ENCODE measurements at regions of chr15 and their contacts with region 1.

Region 1: DNA sequence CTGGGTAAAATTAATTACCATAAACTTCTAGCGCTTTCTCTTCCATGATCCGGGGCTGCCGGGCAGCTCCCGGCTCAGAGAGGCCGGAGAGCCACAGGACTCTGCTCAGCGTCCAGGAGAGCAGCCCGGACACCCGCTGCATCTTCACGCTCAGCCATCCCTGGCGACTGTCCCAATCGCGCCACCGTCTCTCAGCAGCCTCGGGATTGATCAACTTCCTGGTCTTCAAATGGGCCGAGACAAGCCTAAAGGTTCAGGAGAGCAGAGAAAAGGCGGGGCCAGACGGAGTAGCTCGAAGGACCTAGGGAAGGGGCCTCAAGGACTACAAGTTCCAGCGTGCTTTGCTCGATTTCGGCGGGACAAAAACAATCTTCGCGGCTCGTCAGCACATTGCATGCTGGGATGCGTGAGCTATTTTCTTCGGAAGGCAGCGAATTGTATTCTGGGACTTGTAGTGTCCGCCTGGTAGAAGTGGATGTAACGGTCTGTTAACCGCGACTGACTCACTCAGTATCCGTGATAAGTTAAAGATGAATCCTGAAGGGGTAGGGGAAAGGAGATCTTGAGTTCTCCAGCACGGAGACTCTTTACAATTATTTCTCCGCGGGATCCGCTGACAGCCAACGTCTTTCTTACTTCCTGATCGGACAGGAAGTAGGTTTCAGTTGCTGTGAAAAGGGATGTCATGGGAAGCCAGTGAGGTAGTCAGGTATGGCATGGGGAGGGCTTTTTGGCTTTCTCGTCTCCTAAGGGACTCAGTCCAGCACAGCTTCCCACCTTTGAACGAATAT is at the start of gene CIAO2A:
- DNase-seq: peak; percentile 98 to 99 (median 99)
- H3K4me3 ChIP-seq: peak within 1 kb of the TSS; percentile 52 to 90 (median 84)
- H3K4me3 Mint-ChIP-seq: peak within 1 kb of the TSS; percentile 97 to 99
- H3K27ac ChIP-seq: peak within 1 kb of the TSS; percentile 87 to 95
- H3K27ac Mint-ChIP-seq: peak within 1 kb of the TSS; percentile 97 to 100 (median 99)
- H3K4me1 ChIP-seq: peaks cover 80 to 91% of the 10 kb centered on the region in 2 donors
- H3K4me1 Mint-ChIP-seq: peaks cover 71% of the 10 kb centered on the region
- H3K27me3 ChIP-seq: no peaks in the 10 kb centered on the region
- H3K27me3 Mint-ChIP-seq: no peaks in the 10 kb centered on the region
- CTCF ChIP-seq: no peak
- polyA plus RNA-seq, gene CIAO2A: 98.2 to 265 (median 261) TPM

Region 2: DNA sequence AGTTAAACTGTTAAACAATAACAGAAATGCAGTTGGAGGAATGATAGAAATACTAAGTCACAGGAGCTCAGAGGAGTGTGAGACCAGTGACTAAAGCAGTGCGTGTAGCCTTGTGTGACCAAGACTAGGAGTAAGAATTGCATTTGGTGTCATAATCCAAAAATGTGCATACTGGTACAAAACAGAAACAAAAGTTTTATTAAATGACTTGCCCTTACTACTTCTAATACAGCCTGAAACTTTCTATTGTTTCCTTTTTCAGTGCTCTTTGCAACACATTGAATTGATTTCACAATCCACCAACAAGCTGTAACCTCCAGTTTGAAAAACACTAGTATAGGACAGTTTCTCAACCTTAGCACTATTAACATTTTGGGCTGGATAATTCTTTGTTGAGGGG is 19.1 kb after region 1 on chr15:
- intact Hi-C with region 1: loop called in 1 of 2 experiments (anchors 2 kb)
- DNase-seq: peak; percentile 38 to 75 (median 55)
- H3K4me3 ChIP-seq: peak overlapping the region in 1 of 3 experiments; percentile 44
- H3K4me3 Mint-ChIP-seq: peak overlapping the region in 1 of 2 donors; percentile 75
- H3K27ac ChIP-seq: peak overlapping the region; percentile 62 to 90
- H3K27ac Mint-ChIP-seq: peak overlapping the region; percentile 81 to 94 (median 90)
- H3K4me1 ChIP-seq: peaks cover 38 to 45% of the 10 kb centered on the region in 2 donors
- H3K4me1 Mint-ChIP-seq: peaks cover 54% of the 10 kb centered on the region
- H3K27me3 ChIP-seq: no peaks in the 10 kb centered on the region
- H3K27me3 Mint-ChIP-seq: no peaks in the 10 kb centered on the region
- CTCF ChIP-seq: no peak

Region 3: DNA sequence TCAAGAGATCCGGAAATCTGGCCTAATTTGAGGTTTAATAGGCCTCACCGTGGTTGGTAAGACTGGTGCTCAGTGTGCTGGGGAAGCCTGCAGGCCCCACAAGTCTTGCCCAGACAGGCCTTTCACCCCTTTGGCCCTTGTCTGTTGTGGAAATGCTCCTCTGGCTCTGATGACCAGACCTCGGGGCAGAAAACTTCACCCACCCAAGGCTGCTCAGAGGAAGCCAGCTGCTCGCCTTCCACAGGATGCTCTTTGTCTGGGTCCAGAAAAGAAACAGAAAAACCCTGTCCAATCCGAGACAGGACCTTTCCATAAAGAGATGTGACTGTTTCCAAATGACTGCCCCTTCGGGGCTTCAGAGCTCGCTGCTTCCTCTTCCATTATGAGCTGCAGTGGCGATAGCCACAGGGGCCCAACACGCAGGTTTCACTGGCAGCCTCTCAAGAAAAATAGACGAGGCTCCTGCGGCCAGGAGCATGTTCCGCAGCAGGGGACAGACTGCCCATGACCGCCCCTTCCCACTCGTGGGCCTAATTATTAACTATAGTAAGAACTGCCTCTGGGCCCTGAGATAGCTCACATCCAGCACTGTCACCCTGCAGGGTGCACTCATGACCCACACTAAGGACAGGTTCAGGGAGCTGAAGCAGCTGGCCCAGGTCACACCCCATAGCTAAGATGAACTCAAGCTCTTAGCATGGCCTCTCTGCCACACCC is 50.9 kb after region 1 on chr15:
- intact Hi-C with region 1: no loop called
- DNase-seq: no peak
- H3K4me3 ChIP-seq: no peak overlapping the region
- H3K4me3 Mint-ChIP-seq: no peak overlapping the region
- H3K27ac ChIP-seq: no peak overlapping the region
- H3K27ac Mint-ChIP-seq: peak overlapping the region in 3 of 7 donors; percentile 26 to 74 (median 42)
- H3K4me1 ChIP-seq: peaks cover 6 to 13% of the 10 kb centered on the region in 2 donors
- H3K4me1 Mint-ChIP-seq: peaks cover 5% of the 10 kb centered on the region
- H3K27me3 ChIP-seq: no peaks in the 10 kb centered on the region
- H3K27me3 Mint-ChIP-seq: peaks cover 0 to 4% (median 0%) of the 10 kb centered on the region in 3 donors
- CTCF ChIP-seq: no peak

Measured in CD14-positive monocyte (primary cell).